T-cell (primary cell): ENCODE measurements at regions of chr2 and their contacts with region 1.

Region 1: DNA sequence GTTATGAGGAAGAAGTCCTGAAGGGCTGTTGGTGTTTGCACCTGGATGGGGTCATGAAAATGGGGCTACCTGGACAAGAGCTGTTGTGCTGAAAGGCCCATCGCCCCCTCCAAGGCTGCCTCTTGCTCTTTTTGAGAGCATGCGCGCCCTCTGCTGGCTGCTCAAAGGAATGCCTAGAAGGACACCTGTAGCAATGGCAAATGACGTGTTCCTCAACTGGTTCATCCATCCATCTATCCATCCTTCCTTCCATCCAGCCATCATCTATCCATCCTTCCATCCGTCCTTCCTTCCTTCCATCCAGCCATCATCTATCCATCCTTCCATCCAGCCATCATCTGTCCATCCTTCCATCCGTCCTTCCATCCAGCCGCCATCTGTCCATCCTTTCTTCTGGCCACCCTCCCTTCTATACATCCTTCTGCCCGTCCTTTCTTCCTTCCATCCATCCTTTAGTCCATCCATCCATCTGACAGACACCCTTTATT is 17.2 kb upstream of the RPL31 start:
- DNase-seq: peak; percentile 50 to 89 (median 74)
- ATAC-seq: peak; percentile 63 to 79 (median 74)
- H3K4me3 ChIP-seq: no peak overlapping the region
- H3K4me3 Mint-ChIP-seq: no peak overlapping the region
- H3K27ac ChIP-seq: no peak overlapping the region
- H3K27ac Mint-ChIP-seq: no peak overlapping the region
- H3K4me1 ChIP-seq: no peaks in the 10 kb centered on the region
- H3K4me1 Mint-ChIP-seq: peaks cover 0 to 6% (median 0%) of the 10 kb centered on the region in 3 donors
- H3K27me3 ChIP-seq: no peaks in the 10 kb centered on the region
- H3K27me3 Mint-ChIP-seq: peaks cover 0 to 2% of the 10 kb centered on the region in 2 donors

Region 2: GRCh38 chr2:100588071-100588786 is 396.7 kb before region 1 on chr2:
- CTCF ChIA-PET with region 1: interaction called in 1 of 2 experiments, 15 read pairs
- POLR2A ChIA-PET with region 1: no interaction called
- DNase-seq: peak in 11 of 35 experiments; percentile 5 to 81 (median 21)
- ATAC-seq: peak; percentile 93 to 97 (median 96)
- H3K4me3 ChIP-seq: no peak overlapping the region
- H3K4me3 Mint-ChIP-seq: peak overlapping the region in 1 of 3 donors; percentile 13
- H3K27ac ChIP-seq: no peak overlapping the region
- H3K27ac Mint-ChIP-seq: peak overlapping the region; percentile 72 to 79
- H3K4me1 ChIP-seq: peaks cover 0 to 15% of the 10 kb centered on the region in 2 experiments
- H3K4me1 Mint-ChIP-seq: peaks cover 12 to 52% (median 49%) of the 10 kb centered on the region in 3 donors
- H3K27me3 ChIP-seq: peaks cover 0 to 6% of the 10 kb centered on the region in 2 experiments
- H3K27me3 Mint-ChIP-seq: peaks cover 0 to 2% of the 10 kb centered on the region in 2 donors

Region 3: GRCh38 chr2:100610381-100610831 is 374.5 kb before region 1 on chr2:
- CTCF ChIA-PET with region 1: interaction called, 10 to 20 read pairs
- POLR2A ChIA-PET with region 1: no interaction called
- DNase-seq: peak; percentile 58 to 85 (median 78)
- ATAC-seq: peak; percentile 86 to 97 (median 88)
- H3K4me3 ChIP-seq: no peak overlapping the region
- H3K4me3 Mint-ChIP-seq: no peak overlapping the region
- H3K27ac ChIP-seq: no peak overlapping the region
- H3K27ac Mint-ChIP-seq: no peak overlapping the region
- H3K4me1 ChIP-seq: peaks cover 0 to 6% of the 10 kb centered on the region in 2 experiments
- H3K4me1 Mint-ChIP-seq: peaks cover 2 to 26% (median 5%) of the 10 kb centered on the region in 3 donors
- H3K27me3 ChIP-seq: peaks cover 0 to 5% of the 10 kb centered on the region in 2 experiments
- H3K27me3 Mint-ChIP-seq: peaks cover 2 to 5% of the 10 kb centered on the region in 2 donors

Region 4: GRCh38 chr2:100615471-100615870 is 369.5 kb before region 1 on chr2:
- CTCF ChIA-PET with region 1: interaction called, 10 to 20 read pairs
- POLR2A ChIA-PET with region 1: no interaction called
- DNase-seq: no peak
- ATAC-seq: no peak
- H3K4me3 ChIP-seq: no peak overlapping the region
- H3K4me3 Mint-ChIP-seq: no peak overlapping the region
- H3K27ac ChIP-seq: no peak overlapping the region
- H3K27ac Mint-ChIP-seq: no peak overlapping the region
- H3K4me1 ChIP-seq: peaks cover 0 to 2% of the 10 kb centered on the region in 2 experiments
- H3K4me1 Mint-ChIP-seq: peaks cover 4 to 22% (median 8%) of the 10 kb centered on the region in 3 donors
- H3K27me3 ChIP-seq: peaks cover 0 to 13% of the 10 kb centered on the region in 2 experiments
- H3K27me3 Mint-ChIP-seq: no peaks in the 10 kb centered on the region

Region 5: GRCh38 chr2:100948942-100949811 is 35.8 kb before region 1 on chr2:
- CTCF ChIA-PET with region 1: no interaction called
- POLR2A ChIA-PET with region 1: no interaction called
- DNase-seq: no peak
- ATAC-seq: no peak
- H3K4me3 ChIP-seq: no peak overlapping the region
- H3K4me3 Mint-ChIP-seq: no peak overlapping the region
- H3K27ac ChIP-seq: no peak overlapping the region
- H3K27ac Mint-ChIP-seq: no peak overlapping the region
- H3K4me1 ChIP-seq: peaks cover 0 to 4% of the 10 kb centered on the region in 2 experiments
- H3K4me1 Mint-ChIP-seq: peaks cover 11 to 32% (median 17%) of the 10 kb centered on the region in 3 donors
- H3K27me3 ChIP-seq: no peaks in the 10 kb centered on the region
- H3K27me3 Mint-ChIP-seq: peaks cover 5 to 10% of the 10 kb centered on the region in 2 donors

Region 6: DNA sequence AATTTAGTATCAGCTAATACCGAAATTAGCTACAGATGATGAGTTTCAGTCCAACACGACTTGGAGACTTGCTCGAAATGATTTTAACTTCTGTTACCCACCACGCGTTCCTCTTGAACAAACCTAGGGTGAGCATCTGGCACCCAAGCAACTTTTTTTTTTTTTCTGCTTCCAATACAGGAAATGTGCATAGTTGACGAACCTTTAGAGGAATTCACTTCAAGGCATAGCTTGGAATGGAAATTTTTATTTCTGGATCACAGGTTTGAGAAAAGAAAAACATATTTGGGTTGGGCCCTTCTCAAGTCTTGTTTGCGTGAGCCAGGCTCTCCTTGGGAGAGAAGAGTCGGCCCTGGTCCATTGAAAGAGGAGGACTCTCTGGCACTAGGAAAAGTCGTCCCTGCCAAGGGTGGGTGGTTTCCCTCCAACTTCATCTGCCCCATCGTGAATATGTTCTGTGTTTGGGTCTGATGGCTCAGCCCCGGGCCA is 20.2 kb before region 1 on chr2:
- CTCF ChIA-PET with region 1: no interaction called
- POLR2A ChIA-PET with region 1: no interaction called
- DNase-seq: no peak
- ATAC-seq: no peak
- H3K4me3 ChIP-seq: no peak overlapping the region
- H3K4me3 Mint-ChIP-seq: no peak overlapping the region
- H3K27ac ChIP-seq: no peak overlapping the region
- H3K27ac Mint-ChIP-seq: no peak overlapping the region
- H3K4me1 ChIP-seq: peaks cover 4 to 9% of the 10 kb centered on the region in 2 experiments
- H3K4me1 Mint-ChIP-seq: peaks cover 7 to 9% (median 8%) of the 10 kb centered on the region in 3 donors
- H3K27me3 ChIP-seq: peaks cover 0 to 3% of the 10 kb centered on the region in 2 experiments
- H3K27me3 Mint-ChIP-seq: no peaks in the 10 kb centered on the region